Activated CD4-positive, alpha-beta T cell treated with anti-CD3 and anti-CD28 coated beads for 36 hours (primary cell): ENCODE measurements at regions of chr4 and their contacts with region 1.

Region 1: GRCh38 chr4:108109997-108110416 is 58.7 kb downstream of the LEF1 start:
- DNase-seq: no peak
- ATAC-seq: peak; percentile 25
- H3K4me3 Mint-ChIP-seq: peak overlapping the region; percentile 22
- H3K27ac Mint-ChIP-seq: peak overlapping the region; percentile 91
- H3K4me1 Mint-ChIP-seq: peaks cover 89% of the 10 kb centered on the region
- H3K27me3 Mint-ChIP-seq: no peaks in the 10 kb centered on the region

Region 2: GRCh38 chr4:108036213-108036612 is 73.8 kb before region 1 on chr4:
- CTCF ChIA-PET with region 1: interaction called, 9 read pairs
- POLR2A ChIA-PET with region 1: no interaction called
- intact Hi-C with region 1: loop called (anchors 1 to 2 kb)
- DNase-seq: peak; percentile 86
- ATAC-seq: peak; percentile 74
- H3K4me3 Mint-ChIP-seq: peak overlapping the region; percentile 59
- H3K27ac Mint-ChIP-seq: peak overlapping the region; percentile 94
- H3K4me1 Mint-ChIP-seq: peaks cover 65% of the 10 kb centered on the region
- H3K27me3 Mint-ChIP-seq: no peaks in the 10 kb centered on the region

Region 3: DNA sequence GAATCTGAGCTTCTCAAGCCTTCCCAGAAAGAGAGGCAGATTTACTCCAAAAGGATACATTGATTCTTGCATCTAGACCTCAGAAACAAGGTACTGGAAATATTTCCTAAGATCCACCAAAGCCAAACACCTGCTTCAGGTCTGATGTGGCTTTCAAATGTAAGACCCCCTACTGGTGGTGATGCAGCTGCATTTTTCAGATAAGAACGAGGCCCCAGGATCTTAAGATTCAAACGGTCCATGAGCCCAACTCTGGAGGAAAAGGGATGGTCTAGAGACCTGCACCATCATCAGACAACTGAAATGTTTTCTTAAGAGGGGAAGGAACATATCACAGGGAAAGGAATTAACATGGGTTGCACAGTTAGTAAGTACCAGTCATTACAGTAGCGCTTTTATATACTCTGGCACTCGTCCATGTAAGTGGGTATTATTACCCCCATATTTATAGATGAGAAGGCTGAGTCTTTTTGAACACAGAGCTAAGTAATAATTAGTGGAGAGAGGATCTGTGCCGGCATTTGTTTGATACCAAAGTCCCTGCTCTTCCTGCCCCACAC is 15.0 kb before region 1 on chr4:
- CTCF ChIA-PET with region 1: interaction called, 17 read pairs
- POLR2A ChIA-PET with region 1: interaction called, 9 read pairs
- intact Hi-C with region 1: loop called (anchors 1 kb)
- DNase-seq: no peak
- ATAC-seq: peak; percentile 45
- H3K4me3 Mint-ChIP-seq: no peak overlapping the region
- H3K27ac Mint-ChIP-seq: peak overlapping the region; percentile 81
- H3K4me1 Mint-ChIP-seq: peaks cover 86% of the 10 kb centered on the region
- H3K27me3 Mint-ChIP-seq: no peaks in the 10 kb centered on the region

Region 4: GRCh38 chr4:108148316-108148715 is 38.3 kb after region 1 on chr4:
- CTCF ChIA-PET with region 1: interaction called, 37 read pairs
- POLR2A ChIA-PET with region 1: interaction called, 6 read pairs
- intact Hi-C with region 1: loop called in 1 of 2 experiments (anchors 2 kb)
- DNase-seq: peak; percentile 69
- ATAC-seq: peak; percentile 66
- H3K4me3 Mint-ChIP-seq: peak overlapping the region; percentile 37
- H3K27ac Mint-ChIP-seq: peak overlapping the region; percentile 83
- H3K4me1 Mint-ChIP-seq: peaks cover 89% of the 10 kb centered on the region
- H3K27me3 Mint-ChIP-seq: no peaks in the 10 kb centered on the region

Region 5: GRCh38 chr4:108425988-108426387 is 316.0 kb after region 1 on chr4:
- CTCF ChIA-PET with region 1: no interaction called
- POLR2A ChIA-PET with region 1: no interaction called
- intact Hi-C with region 1: loop called (anchors 2 to 5 kb)
- DNase-seq: peak; percentile 13
- ATAC-seq: peak; percentile 86
- H3K4me3 Mint-ChIP-seq: no peak overlapping the region
- H3K27ac Mint-ChIP-seq: peak overlapping the region; percentile 38
- H3K4me1 Mint-ChIP-seq: peaks cover 33% of the 10 kb centered on the region
- H3K27me3 Mint-ChIP-seq: peaks cover 3% of the 10 kb centered on the region